ENCODE measurements at regions of chr10 and their contacts with region 1.

Region 1: GRCh38 chr10:132163278-132163765 is 23.4 kb upstream of the DPYSL4 start:
- DNase-seq: peak; percentile 46
- CTCF ChIP-seq: no peak

Region 2: DNA sequence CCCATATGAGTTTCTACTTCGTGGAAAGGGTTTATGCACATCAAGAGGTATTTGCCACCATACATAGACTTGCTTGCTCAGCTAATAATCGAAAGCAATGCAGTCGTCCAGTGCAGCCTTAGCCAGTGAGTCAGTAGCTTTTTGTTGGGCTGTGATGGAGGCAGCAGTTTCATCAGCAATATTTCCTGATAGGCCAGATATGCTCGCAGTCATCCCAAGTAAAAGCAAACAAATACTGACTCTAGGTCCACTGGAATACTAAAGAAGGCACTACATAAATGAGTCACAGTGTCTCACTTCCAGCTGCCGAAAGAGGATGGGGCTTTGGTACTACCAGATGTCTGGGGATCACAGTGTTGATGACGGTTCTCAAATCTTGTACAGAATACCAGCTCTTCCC is 179.5 kb before region 1 on chr10:
- CTCF ChIA-PET with region 1: no interaction called
- POLR2A ChIA-PET with region 1: no interaction called
- DNase-seq: no peak
- CTCF ChIP-seq: no peak

Region 3: GRCh38 chr10:132142411-132143161 is 20.7 kb before region 1 on chr10:
- CTCF ChIA-PET with region 1: interaction called, 11 read pairs
- POLR2A ChIA-PET with region 1: no interaction called
- DNase-seq: peak; percentile 83
- CTCF ChIP-seq: peak; percentile 87